ENCODE measurements at regions of chr1 and their contacts with region 1.

Region 1: DNA sequence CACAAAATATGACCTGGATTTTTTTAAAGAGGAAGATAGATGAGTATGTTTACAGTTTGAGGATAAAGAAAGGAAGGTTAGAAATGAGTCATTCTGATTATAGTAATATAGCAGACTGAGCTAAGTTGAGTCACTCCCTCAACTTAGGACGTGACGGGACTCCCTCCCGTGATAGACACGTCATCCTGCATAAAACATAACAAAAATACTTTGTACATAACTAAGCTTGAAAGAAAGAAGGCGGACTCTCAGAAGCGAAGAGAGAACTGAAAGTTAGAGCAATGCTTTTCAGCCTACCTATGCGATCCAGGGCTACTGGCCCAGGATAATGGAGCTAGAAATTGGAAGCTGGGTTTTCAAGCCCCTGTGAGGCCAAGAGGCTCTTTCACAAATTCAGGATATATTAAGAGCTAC is 53.0 kb upstream of the DESI2 start:
- DNase-seq: peak; percentile 84
- H3K4me3 ChIP-seq: peak overlapping the region; percentile 46
- CTCF ChIP-seq: no peak

Region 2: DNA sequence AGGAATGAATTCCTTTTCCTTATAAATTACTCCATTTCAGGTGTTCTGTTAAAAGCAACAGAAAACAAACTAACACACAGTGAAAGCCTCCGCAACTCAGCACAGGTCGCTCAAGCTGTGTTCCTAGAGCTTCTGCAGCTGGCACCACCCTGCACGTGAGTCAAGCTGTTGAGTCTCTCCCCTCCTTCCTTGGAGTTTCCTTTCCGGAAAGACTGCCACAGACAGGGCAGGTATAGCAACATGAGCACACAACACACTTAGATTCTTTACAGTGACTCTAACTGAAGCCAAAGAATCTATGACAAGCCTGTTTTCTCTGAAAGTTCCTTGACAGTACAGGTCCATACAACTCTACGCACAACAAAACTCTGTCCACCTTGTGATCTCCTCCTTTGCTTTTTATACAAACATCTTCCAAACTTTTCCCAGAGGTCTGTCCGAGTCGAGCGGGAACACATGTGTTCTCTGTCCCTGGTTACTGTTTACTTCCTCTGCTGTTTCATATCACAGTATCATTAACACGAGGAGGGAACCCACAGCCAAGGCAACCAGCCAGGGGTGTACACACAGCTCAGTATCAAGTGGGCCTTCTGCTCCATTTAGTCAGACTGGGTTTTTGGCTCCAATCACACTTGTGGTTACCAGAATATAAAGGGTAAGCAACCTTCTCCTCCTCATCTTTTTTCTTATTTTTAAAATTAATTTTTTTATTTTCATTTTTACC is 14.3 kb after region 1 on chr1:
- CTCF ChIA-PET with region 1: interaction called, 37 read pairs
- POLR2A ChIA-PET with region 1: interaction called, 3 read pairs
- DNase-seq: no peak
- H3K4me3 ChIP-seq: no peak overlapping the region
- CTCF ChIP-seq: no peak

Region 3: GRCh38 chr1:244652699-244653466 is 52.9 kb after region 1 on chr1 and contains the start of gene DESI2:
- CTCF ChIA-PET with region 1: interaction called, 20 read pairs
- POLR2A ChIA-PET with region 1: no interaction called
- DNase-seq: peak; percentile 96
- H3K4me3 ChIP-seq: peak within 1 kb of the TSS; percentile 90
- CTCF ChIP-seq: peak; percentile 66

Region 4: GRCh38 chr1:244779410-244779809 is 179.5 kb after region 1 on chr1:
- CTCF ChIA-PET with region 1: interaction called, 15 read pairs
- POLR2A ChIA-PET with region 1: no interaction called
- DNase-seq: no peak
- H3K4me3 ChIP-seq: no peak overlapping the region
- CTCF ChIP-seq: no peak

Region 5: DNA sequence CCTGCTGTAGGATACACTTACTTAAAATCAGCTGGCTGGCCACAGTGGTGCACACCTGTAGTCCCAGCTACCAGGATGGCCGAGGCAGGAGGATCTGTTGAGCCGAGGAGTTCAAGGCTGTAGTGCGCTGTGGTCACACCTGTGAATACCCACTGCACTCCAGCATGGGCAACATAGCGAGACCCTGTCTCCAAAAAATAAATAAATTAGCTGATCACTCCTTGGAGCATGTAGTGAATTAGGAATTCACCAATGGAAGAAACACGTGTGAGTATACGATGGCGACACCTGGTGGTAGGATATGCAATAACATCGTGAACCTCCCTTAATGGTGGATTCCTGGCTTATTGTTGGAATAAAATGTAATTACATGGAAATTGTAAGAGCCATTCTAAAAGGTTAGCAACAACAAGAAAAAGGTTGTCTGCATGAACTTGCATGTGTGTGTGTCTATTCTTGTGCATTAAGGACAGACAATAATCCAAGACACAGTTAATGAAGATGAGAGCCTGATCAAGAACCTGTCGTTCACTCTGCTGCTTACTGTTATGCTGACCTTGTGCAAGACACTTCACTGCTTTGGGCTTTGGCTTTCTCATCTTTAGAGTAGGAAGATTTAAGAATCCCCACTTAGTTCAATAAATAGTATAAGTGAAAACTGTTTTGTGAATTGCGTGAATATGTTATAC is 196.9 kb after region 1 on chr1:
- CTCF ChIA-PET with region 1: interaction called, 264 read pairs
- POLR2A ChIA-PET with region 1: no interaction called
- DNase-seq: no peak
- H3K4me3 ChIP-seq: no peak overlapping the region
- CTCF ChIP-seq: peak; percentile 72

Region 6: DNA sequence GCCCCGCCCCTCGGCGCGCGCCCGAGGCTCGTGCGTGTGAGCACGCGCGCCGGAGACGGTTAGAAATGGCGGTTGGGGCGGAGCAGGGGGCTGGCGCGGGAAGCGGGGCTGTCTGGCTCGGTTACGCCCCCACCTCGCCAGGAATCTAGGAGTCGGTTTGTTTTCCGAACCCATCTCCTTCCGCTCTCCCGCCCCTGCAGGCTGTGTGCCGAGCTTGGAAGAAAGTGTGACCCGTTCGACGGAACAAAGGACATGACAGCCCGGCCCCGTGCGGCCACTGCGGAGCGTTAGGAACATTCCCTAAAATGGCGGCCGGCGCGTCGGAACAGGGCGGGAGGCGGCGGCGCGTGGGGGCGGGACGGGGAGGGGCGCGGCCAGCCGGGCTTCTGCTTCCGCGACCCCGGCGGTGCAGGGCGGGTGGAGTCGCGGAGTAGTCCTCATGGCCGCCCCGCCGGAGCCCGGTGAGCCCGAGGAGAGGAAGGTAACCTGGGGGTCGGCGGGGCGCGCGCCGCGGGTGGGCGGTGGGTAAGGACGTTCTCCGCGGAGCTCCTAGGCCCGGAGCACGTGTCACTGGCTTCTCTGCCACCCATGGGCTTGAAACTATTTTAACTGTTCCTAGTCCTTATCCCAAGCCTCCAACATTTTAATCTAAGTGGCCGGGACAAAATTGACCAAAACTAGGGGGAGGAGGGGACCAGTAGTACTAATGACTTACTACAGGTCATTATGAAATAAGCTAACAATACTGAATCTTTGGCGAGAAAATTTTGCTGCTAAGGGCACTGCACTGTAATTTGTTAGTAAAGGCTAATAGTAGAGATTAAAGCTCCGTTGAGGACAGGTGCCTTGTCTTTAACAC is 235.6 kb after region 1 on chr1 and contains the start of gene COX20:
- CTCF ChIA-PET with region 1: interaction called, 18 read pairs
- POLR2A ChIA-PET with region 1: interaction called, 4 read pairs
- DNase-seq: no peak
- H3K4me3 ChIP-seq: peak within 1 kb of the TSS; percentile 73
- CTCF ChIP-seq: no peak

Measured in AG04449 (cell line).